ENCODE measurements at regions of chr4 and their contacts with region 1.

Region 1: DNA sequence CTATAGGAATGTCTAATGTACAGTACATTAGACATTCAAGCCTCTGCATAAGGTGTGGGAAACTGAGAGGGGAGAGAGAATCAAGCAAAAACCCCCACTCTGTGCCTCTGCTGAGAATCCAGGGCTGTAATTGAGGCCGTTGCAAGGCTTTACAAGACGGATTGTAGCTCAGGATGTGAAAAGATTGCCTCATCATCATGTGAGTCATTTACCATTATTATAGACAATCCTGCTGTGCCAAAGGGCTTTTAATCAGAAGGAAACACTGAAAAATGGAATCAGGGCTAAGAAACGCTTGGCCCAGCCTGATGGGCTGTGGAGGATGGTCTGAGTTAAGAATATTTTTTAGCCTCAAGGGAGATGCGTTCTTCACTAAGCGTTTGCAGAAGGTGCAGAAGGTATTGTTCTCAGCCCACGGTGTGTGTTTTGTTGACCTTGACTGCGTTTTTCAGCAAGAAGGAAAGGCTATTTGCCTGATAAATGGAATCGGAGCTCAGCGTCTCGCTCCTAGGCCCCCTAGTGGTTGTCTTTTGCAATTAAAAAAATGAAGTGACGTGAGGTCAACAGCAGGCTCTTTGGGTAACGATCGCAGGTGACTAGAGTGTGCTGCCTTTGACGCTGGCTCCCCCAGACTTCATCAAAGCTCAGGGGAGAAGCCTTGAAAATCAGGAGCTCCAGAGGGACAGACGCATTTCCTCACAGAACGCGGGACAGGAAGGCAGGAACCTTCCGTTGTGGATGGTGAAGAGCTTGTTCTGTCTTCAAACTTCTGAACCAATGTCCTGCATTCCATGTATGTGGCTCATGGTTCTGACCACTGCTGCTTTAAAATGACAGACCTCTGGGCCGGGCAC is 18.1 kb upstream of the CHRNA9 start:
- DNase-seq: peak; percentile 81
- ATAC-seq: peak; percentile 67
- H3K4me3 Mint-ChIP-seq: peak overlapping the region; percentile 80
- H3K27ac Mint-ChIP-seq: peak overlapping the region; percentile 94
- H3K4me1 Mint-ChIP-seq: peaks cover 56% of the 10 kb centered on the region
- H3K27me3 Mint-ChIP-seq: no peaks in the 10 kb centered on the region

Region 2: GRCh38 chr4:40152637-40153036 is 164.4 kb before region 1 on chr4:
- CTCF ChIA-PET with region 1: interaction called, 16 read pairs
- POLR2A ChIA-PET with region 1: no interaction called
- DNase-seq: no peak
- ATAC-seq: peak; percentile 48
- H3K4me3 Mint-ChIP-seq: peak overlapping the region; percentile 10
- H3K27ac Mint-ChIP-seq: no peak overlapping the region
- H3K4me1 Mint-ChIP-seq: peaks cover 28% of the 10 kb centered on the region
- H3K27me3 Mint-ChIP-seq: no peaks in the 10 kb centered on the region

Region 3: DNA sequence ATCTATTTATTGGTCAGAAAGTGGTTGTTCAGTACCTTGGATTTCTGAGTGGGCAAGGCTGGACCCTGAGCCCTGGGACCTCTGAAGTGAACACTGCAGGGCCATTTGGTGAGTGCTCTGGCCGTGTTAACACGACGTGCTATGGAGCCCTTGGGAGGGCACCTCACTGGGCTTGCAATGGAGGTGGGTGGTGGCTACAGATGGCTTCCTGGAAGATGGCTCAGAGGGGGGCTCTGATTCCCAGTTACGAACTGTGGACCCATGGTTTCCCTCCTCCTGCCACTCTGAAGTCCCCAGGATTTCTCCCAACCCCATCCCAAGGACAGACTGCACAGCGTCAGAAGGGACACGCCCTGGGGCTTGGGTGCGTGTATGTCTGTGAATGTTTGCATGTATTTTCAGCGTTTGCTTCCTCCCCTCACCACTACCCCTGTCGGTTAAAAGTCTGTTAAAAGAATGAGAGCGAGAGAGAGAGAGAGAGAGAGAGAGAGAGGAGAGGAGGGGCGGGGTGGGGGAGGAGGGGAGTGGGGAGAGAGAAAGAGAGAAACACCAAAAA is 123.9 kb before region 1 on chr4:
- CTCF ChIA-PET with region 1: interaction called, 149 read pairs
- POLR2A ChIA-PET with region 1: interaction called, 155 read pairs
- DNase-seq: peak; percentile 71
- ATAC-seq: peak; percentile 31
- H3K4me3 Mint-ChIP-seq: peak overlapping the region; percentile 93
- H3K27ac Mint-ChIP-seq: peak overlapping the region; percentile 96
- H3K4me1 Mint-ChIP-seq: peaks cover 67% of the 10 kb centered on the region
- H3K27me3 Mint-ChIP-seq: no peaks in the 10 kb centered on the region

Region 4: GRCh38 chr4:40205259-40206198 is 111.5 kb before region 1 on chr4:
- CTCF ChIA-PET with region 1: interaction called, 149 read pairs
- POLR2A ChIA-PET with region 1: interaction called, 155 read pairs
- DNase-seq: peak; percentile 73
- ATAC-seq: peak; percentile 50
- H3K4me3 Mint-ChIP-seq: peak overlapping the region; percentile 93
- H3K27ac Mint-ChIP-seq: peak overlapping the region; percentile 96
- H3K4me1 Mint-ChIP-seq: peaks cover 55% of the 10 kb centered on the region
- H3K27me3 Mint-ChIP-seq: no peaks in the 10 kb centered on the region

Region 5: GRCh38 chr4:40221744-40222143 is 95.3 kb before region 1 on chr4:
- CTCF ChIA-PET with region 1: interaction called, 145 read pairs
- POLR2A ChIA-PET with region 1: interaction called, 5 read pairs
- DNase-seq: no peak
- ATAC-seq: no peak
- H3K4me3 Mint-ChIP-seq: peak overlapping the region; percentile 53
- H3K27ac Mint-ChIP-seq: peak overlapping the region; percentile 77
- H3K4me1 Mint-ChIP-seq: peaks cover 96% of the 10 kb centered on the region
- H3K27me3 Mint-ChIP-seq: no peaks in the 10 kb centered on the region

Region 6: DNA sequence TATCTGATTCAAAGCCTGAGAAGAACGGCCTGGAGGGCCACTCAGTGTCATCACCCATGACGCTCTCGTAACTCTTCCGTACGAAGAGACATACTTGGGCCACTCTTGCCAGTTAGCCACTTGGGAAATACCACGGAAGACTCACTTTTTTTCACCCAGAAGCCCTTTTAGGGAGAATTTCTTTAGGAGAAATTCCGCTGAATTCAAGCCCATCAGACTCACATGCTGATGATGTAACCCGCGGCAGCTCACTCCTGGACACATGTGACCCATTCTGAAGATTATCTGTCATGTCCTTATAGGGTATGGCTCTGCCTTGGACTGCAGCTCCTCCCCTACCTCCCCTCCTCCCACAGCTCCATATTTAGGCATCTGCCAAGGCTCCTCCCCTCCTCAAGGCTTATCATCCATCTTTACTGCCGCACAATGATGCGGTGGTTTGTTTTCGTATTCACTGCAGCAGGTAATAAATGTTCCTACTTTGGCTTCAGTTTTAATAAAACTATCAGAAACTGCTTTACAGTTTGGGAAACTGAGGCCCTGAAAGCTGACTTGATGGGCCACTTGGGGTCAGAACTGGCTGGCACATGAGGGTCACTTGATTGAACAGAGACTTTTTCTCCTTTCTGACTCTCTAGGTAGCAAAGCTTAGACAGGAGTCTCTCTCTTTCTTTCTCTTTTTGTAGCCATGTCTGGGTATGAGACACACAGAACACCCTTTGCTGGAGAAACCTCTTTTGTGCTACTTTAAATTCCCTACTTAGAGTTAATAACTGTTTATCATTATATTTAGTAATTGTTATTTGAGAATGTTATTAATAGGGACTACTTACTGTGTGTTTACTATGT is 78.1 kb before region 1 on chr4:
- CTCF ChIA-PET with region 1: interaction called, 30 read pairs
- POLR2A ChIA-PET with region 1: interaction called, 3 read pairs
- DNase-seq: peak; percentile 92
- ATAC-seq: peak; percentile 91
- H3K4me3 Mint-ChIP-seq: peak overlapping the region; percentile 71
- H3K27ac Mint-ChIP-seq: peak overlapping the region; percentile 96
- H3K4me1 Mint-ChIP-seq: peaks cover 89% of the 10 kb centered on the region
- H3K27me3 Mint-ChIP-seq: no peaks in the 10 kb centered on the region

Region 7: DNA sequence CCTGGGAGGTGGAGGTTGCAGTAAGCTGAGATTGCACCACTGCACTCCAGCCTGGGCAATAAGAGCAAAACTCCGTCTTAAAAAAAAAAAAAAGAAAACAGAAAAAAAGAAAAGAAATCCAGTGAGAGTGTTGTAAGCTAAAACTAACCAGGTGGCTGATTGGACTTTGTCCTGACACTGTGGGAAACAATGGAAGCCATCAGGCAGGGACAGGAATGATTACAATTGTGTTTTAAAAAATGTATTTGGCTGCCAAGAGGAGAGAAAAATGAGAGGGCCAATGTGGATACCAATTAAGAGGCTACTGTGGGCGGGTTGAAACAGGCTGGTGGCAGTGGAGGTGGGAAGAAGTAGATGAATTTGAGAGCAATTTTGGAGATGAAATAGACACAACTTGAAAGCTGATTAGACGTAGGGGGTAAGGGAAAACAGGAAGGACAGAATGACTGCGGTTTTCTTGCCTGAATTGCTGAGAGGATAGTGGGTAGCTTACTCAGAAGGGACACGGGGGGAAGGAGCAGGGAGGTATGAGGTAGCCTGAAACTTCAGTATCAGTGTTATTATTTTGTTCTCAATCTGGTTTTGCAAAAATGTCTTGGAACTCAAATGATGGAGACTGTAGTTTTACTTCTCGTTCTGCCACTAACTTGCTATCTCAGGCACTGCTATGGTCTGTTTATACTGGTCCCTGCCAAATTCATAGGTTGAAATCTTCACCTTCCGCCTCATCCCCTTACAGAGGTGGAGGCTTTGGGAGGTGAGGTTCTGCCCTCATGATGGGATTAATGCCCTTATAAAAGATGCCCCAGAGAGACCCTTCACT is 27.4 kb before region 1 on chr4:
- CTCF ChIA-PET with region 1: interaction called, 18 read pairs
- POLR2A ChIA-PET with region 1: no interaction called
- DNase-seq: peak; percentile 31
- ATAC-seq: peak; percentile 74
- H3K4me3 Mint-ChIP-seq: peak overlapping the region; percentile 42
- H3K27ac Mint-ChIP-seq: peak overlapping the region; percentile 89
- H3K4me1 Mint-ChIP-seq: peaks cover 46% of the 10 kb centered on the region
- H3K27me3 Mint-ChIP-seq: no peaks in the 10 kb centered on the region

Region 8: DNA sequence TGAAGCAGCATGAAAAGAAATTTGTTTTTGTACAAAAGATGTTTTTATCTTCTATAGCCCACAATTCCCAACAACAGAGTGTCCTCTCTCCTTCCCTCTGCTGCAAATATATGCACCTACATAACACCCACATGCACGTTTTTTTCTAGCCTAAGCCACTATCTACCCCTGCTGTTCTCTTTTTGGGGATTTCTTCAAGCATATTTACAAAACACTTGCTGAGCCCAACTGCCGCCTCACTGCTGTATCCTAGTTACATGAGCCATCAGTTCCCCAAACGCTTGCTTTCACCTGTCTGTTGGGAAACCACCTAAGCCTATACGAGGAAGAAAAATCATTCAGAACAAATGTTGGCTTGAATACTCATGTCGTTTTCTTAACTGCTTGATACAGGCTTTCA is 145.3 kb after region 1 on chr4:
- CTCF ChIA-PET with region 1: no interaction called
- POLR2A ChIA-PET with region 1: no interaction called
- DNase-seq: no peak
- ATAC-seq: no peak
- H3K4me3 Mint-ChIP-seq: no peak overlapping the region
- H3K27ac Mint-ChIP-seq: no peak overlapping the region
- H3K4me1 Mint-ChIP-seq: peaks cover 3% of the 10 kb centered on the region
- H3K27me3 Mint-ChIP-seq: peaks cover 4% of the 10 kb centered on the region

Region 9: DNA sequence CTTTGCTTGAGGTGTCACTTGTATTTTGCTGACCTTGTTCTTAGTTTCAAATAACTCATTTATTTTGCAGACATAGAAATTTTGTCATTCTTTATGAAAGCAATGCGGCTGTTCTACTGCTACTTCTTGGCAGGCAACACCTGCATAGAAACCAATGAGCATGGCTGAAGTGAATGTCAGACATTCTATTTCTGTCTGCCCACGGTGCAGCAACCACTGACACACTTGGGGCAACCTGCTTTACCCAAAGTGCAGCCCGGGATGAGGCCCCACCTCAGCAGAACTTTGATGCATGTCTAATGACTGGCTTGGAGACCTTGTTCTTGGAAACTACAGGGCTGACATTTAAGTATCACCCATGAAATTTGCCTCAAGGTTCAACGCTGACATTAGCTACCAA is 219.0 kb after region 1 on chr4:
- CTCF ChIA-PET with region 1: no interaction called
- POLR2A ChIA-PET with region 1: no interaction called
- DNase-seq: no peak
- ATAC-seq: no peak
- H3K4me3 Mint-ChIP-seq: no peak overlapping the region
- H3K27ac Mint-ChIP-seq: no peak overlapping the region
- H3K4me1 Mint-ChIP-seq: no peaks in the 10 kb centered on the region
- H3K27me3 Mint-ChIP-seq: no peaks in the 10 kb centered on the region

Region 10: GRCh38 chr4:40613456-40613855 is 296.4 kb after region 1 on chr4:
- CTCF ChIA-PET with region 1: no interaction called
- POLR2A ChIA-PET with region 1: no interaction called
- DNase-seq: no peak
- ATAC-seq: no peak
- H3K4me3 Mint-ChIP-seq: no peak overlapping the region
- H3K27ac Mint-ChIP-seq: peak overlapping the region; percentile 25
- H3K4me1 Mint-ChIP-seq: peaks cover 18% of the 10 kb centered on the region
- H3K27me3 Mint-ChIP-seq: peaks cover 3% of the 10 kb centered on the region